Cardiac septum (tissue), 1 donor: ENCODE measurements at regions of chr5 and their contacts with region 1.

Region 1: DNA sequence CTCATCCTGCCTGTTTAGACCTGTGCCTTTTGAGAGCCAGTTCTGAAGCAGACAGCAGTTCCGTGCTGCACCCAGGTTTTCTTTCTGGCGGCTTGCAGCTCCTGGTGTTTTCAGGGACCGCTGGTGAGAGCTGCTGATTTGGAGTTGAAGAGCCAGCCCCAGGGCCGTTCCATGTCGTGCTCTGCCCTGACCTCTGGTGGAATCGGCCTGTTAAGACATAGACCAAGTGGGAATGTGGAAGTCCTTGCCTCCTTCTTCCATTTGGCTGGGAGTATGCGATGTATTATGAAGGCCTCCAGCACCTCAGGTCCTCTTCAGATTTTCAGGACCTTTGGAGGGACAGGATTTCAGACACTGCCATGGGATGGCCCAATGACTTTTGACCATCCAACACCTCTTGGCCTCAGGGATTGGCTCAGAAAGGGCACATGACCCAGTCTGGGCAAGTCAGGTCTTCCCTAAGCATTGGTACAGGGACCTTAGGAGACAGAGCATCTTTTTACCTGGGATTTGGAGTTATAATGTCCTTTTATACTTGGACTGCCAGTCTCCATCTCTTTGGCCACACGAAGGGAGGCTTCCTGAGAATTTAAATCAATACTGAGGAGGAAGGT is 136.1 kb upstream of the CLINT1 start:
- DNase-seq: no peak

Region 2: DNA sequence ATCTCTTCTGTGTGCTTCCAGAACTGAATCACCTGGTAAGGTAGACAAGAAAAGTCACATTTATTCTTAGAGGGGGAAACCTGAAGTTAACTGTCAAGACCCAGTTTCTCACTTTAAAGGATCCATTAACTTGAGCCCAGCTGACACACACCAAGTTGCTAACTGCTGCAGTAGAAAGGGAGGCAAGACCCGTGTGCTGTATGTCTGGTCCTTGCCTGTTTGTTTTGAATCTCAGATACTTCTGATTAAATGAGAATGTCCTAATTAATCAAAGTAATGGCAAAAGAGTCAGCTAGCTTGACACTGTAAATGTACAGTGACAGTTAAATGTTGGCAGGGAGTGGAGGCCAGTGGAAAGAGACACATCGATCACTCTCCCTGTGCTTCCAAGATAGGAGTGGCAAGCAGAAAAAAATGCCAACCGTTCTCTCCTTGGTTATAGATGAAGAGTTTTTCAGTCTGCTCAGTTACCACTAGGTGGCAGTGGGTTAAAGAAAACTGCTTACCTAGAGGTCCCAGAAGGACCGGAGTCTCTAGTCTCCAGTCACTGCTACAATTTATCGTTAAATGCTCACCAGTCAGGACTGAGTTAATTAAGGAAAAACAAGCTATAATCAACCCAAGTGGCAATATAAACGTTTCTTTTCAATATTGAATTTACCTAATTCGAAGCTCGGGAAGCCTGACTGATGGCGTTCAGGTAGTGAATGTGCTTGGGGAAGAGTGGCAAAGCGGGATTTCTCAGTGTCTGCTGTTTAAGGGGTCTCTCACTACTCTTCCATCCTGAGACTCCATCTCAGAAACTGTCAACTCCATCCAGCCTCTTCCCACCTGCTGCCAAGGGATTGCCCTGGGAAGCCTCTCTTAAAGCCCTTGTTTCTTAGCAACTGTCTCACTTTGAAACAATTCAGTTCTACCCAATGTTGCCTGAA is 233.1 kb before region 1 on chr5:
- intact Hi-C with region 1: loop called (anchors 1 kb)
- DNase-seq: no peak

Region 3: DNA sequence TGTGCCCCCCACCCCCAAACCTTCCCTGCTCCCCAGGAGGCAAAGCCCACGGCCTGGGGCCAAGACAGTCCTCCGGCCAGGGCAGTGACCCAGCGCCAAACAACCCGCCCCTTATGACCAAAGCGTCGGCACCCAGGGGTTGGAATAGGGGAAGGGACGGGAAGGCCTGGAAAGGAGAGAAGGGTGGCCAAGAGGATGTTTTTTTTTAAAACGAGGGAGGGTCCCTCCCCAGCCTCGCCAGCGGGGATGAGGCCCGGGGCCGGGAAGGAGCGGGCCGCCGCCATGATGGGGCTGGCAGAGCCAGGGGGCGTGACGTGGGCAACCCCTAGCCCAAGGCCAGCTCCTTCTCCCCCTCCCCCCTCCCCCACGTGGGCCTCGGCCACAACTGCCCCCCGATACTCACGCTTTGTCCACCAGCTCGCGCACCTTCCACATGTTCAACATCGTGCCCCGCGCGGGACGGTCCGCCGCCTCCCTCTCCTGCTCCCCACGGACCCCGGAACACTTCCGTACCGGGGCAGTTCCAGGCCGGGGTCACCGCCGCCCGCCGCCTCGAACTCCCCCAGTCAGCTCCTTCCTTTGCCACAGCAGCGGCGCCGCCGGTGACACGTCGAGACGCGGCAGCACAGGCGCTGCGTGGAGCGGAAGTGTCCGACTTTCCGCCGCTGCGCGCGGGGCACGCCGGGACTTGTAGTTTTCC is 136.3 kb before region 1 on chr5 and contains the start of gene CLINT1:
- intact Hi-C with region 1: loop called (anchors 10 kb)
- DNase-seq: peak; percentile 97
- total RNA-seq, gene CLINT1: 53.0 TPM

Region 4: DNA sequence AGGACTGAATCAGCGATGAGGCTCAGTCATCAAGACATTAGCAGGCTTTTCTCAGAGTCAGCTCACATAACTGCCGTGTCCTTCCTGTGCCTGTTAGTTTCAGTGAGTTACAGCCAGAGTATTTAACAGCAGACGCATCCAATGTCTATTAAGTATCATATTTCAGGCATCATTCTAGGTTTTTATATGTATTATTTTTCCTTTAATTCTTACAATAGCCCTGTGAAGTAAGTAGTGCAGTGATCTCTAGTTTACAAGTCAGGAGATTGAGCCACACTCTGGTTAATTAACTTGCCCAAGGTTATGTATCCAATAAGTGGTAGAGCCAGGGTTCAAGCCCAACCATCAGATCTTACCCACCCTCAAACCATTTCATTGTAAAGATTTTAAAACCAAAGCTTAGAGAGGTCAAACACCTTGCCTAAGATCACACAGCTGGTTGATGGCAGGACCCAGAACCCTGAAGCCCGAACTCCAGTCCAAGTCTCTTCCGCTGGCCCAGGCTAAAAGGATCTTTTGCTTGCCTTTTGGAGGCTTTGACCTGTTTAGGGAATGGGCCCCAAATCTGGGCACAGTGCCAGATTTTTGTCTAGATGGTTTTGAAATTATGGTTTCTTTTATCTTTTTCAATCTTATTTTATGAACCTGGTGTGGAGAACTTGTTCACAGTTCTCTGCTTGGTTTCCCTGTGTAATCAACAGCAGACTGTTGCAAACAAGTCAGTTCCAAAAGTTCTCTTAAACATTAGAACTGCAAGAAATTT is 125.1 kb after region 1 on chr5:
- intact Hi-C with region 1: no loop called
- DNase-seq: no peak